Naive thymus-derived CD4-positive, alpha-beta T cell (primary cell): ENCODE measurements at regions of chr20 and their contacts with region 1.

Region 1: GRCh38 chr20:62386383-62387218 is at the start of gene RPS21:
- DNase-seq: peak; percentile 89 to 95 (median 92)
- ATAC-seq: peak; percentile 95
- H3K4me3 ChIP-seq: peak within 1 kb of the TSS; percentile 94
- H3K4me3 Mint-ChIP-seq: peak within 1 kb of the TSS; percentile 90 to 96 (median 92)
- H3K27ac ChIP-seq: peak within 1 kb of the TSS; percentile 98
- H3K27ac Mint-ChIP-seq: peak within 1 kb of the TSS; percentile 89 to 96 (median 93)
- H3K4me1 ChIP-seq: peaks cover 24 to 28% of the 10 kb centered on the region in 2 donors
- H3K4me1 Mint-ChIP-seq: peaks cover 40 to 59% (median 50%) of the 10 kb centered on the region in 7 donors
- H3K27me3 ChIP-seq: no peaks in the 10 kb centered on the region
- H3K27me3 Mint-ChIP-seq: no peaks in the 10 kb centered on the region
- total RNA-seq, gene RPS21: 2,026 to 3,407 (median 3,308) TPM

Region 2: GRCh38 chr20:62121776-62122631 is 264.6 kb before region 1 on chr20 and contains the start of gene LSM14B:
- CTCF ChIA-PET with region 1: no interaction called
- POLR2A ChIA-PET with region 1: interaction called, 5 read pairs
- intact Hi-C with region 1: loop called (anchors 5 kb)
- DNase-seq: peak; percentile 94 to 99 (median 96)
- ATAC-seq: peak; percentile 91
- H3K4me3 ChIP-seq: peak within 1 kb of the TSS; percentile 77
- H3K4me3 Mint-ChIP-seq: peak within 1 kb of the TSS; percentile 86 to 96 (median 92)
- H3K27ac ChIP-seq: peak within 1 kb of the TSS; percentile 81
- H3K27ac Mint-ChIP-seq: peak within 1 kb of the TSS; percentile 84 to 97 (median 95)
- H3K4me1 ChIP-seq: peaks cover 33 to 39% of the 10 kb centered on the region in 2 donors
- H3K4me1 Mint-ChIP-seq: peaks cover 42 to 71% (median 59%) of the 10 kb centered on the region in 7 donors
- H3K27me3 ChIP-seq: no peaks in the 10 kb centered on the region
- H3K27me3 Mint-ChIP-seq: no peaks in the 10 kb centered on the region
- total RNA-seq, gene LSM14B: 39.5 to 61.5 (median 41.9) TPM

Region 3: GRCh38 chr20:62182613-62183425 is 203.8 kb before region 1 on chr20 and contains the start of gene MTG2:
- CTCF ChIA-PET with region 1: no interaction called
- POLR2A ChIA-PET with region 1: no interaction called
- intact Hi-C with region 1: loop called (anchors 1 to 2 kb)
- DNase-seq: peak; percentile 81 to 94 (median 93)
- ATAC-seq: peak; percentile 95
- H3K4me3 ChIP-seq: peak within 1 kb of the TSS; percentile 87
- H3K4me3 Mint-ChIP-seq: peak within 1 kb of the TSS; percentile 84 to 95 (median 90)
- H3K27ac ChIP-seq: peak within 1 kb of the TSS; percentile 92
- H3K27ac Mint-ChIP-seq: peak within 1 kb of the TSS; percentile 90 to 97 (median 95)
- H3K4me1 ChIP-seq: peaks cover 9 to 16% of the 10 kb centered on the region in 2 donors
- H3K4me1 Mint-ChIP-seq: peaks cover 15 to 55% (median 42%) of the 10 kb centered on the region in 7 donors
- H3K27me3 ChIP-seq: no peaks in the 10 kb centered on the region
- H3K27me3 Mint-ChIP-seq: no peaks in the 10 kb centered on the region
- total RNA-seq, gene MTG2: 20.4 to 51.5 (median 41.8) TPM

Region 4: DNA sequence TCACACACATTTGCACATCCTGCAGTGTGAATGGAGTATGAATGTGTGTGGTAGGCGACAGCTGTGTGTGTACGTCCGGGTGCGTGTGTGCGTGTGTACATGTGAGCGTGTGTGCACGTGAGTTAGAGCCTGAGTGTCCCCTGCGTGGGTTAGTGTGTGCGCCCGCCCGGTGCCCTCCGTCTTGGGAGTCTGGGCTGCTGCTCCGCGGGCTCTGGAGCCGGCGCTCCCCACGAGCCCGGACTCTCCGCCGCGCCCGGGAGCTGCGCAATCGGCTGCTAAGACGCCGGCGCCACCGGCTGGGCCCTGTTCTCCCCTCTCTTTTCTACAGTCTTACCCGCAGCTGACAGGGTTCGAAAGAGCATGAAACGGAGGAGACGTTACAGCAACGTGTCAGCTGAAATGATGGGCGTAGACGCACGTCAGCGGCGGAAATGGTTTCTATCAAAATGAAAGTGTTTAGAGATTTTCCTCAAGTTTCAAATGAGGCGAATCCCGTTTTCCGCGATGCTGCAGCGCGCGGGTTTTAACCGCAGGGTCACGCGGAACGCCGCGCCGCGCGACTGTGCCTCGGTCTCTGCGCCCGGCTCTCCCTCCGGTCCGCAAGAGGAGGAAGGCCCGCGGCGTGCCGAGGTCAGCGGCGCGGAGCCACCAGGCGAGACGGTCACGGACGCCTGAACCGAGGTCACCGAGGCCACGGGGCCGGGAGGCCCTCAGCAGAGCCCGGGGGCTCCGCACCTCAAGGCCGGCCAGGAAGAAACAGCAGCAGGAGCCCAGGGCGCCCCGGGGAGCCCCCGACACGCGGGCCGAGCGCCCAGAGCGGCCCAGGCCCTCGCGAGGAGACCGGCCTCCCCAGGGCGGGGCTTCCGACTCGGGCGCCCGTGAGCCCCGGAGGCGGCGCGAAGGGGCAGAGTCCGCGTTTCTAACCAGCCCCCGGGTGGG is 715.4 kb after region 1 on chr20:
- CTCF ChIA-PET with region 1: no interaction called
- POLR2A ChIA-PET with region 1: no interaction called
- intact Hi-C with region 1: loop called in 1 of 2 experiments (anchors 2 kb)
- DNase-seq: peak; percentile 53 to 84 (median 80)
- ATAC-seq: peak; percentile 76
- H3K4me3 ChIP-seq: peak overlapping the region; percentile 84
- H3K4me3 Mint-ChIP-seq: peak overlapping the region; percentile 86 to 95 (median 92)
- H3K27ac ChIP-seq: peak overlapping the region; percentile 88
- H3K27ac Mint-ChIP-seq: peak overlapping the region; percentile 90 to 99 (median 96)
- H3K4me1 ChIP-seq: no peaks in the 10 kb centered on the region
- H3K4me1 Mint-ChIP-seq: peaks cover 0 to 8% (median 5%) of the 10 kb centered on the region in 7 donors
- H3K27me3 ChIP-seq: no peaks in the 10 kb centered on the region
- H3K27me3 Mint-ChIP-seq: no peaks in the 10 kb centered on the region